ENCODE measurements at regions of chr12 and their contacts with region 1.

Region 1: DNA sequence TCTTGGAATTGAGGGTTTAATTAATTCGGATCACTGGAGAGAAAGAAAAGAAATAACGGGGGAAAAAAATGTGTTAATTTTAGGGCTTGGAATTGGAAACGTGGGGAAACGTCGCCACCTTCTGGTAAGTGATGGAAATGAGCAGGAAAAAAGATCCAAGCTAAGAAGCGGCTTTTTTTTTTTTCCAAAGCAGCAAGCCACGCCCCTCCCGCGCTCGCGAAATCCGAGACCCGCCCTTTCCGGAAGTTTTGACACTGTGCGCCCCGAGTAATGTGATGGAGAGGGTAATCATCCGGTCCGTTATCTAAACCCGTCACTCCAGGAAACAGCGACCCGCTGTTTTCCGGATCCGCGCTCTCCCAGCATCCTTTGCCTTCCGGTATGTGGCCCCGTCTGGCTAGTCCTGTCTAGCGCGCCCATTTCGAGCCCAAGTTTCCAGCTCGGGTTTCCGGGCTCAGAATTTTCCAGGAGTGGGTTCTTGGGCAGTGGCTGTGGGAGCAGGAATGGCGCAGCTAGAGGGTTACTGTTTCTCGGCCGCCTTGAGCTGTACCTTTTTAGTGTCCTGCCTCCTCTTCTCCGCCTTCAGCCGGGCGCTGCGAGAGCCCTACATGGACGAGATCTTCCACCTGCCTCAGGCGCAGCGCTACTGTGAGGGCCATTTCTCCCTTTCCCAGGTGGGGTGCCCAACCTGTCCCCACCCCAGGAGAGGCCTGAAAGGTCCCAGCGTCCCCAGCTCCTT is at the start of gene ALG10B:
- DNase-seq: peak; percentile 97
- H3K4me3 ChIP-seq: peak within 1 kb of the TSS; percentile 86
- H3K27ac ChIP-seq: peak within 1 kb of the TSS; percentile 86
- H3K4me1 ChIP-seq: no peaks in the 10 kb centered on the region
- H3K27me3 ChIP-seq: no peaks in the 10 kb centered on the region
- CTCF ChIP-seq: peak; percentile 76
- total RNA-seq, gene ALG10B: 12.1 and 13.8 TPM in 2 replicates

Region 2: GRCh38 chr12:38016606-38017005 is 300.0 kb before region 1 on chr12:
- CTCF ChIA-PET with region 1: no interaction called
- POLR2A ChIA-PET with region 1: no interaction called
- intact Hi-C with region 1: no loop called
- DNase-seq: no peak
- H3K4me3 ChIP-seq: no peak overlapping the region
- H3K27ac ChIP-seq: no peak overlapping the region
- H3K4me1 ChIP-seq: no peaks in the 10 kb centered on the region
- H3K27me3 ChIP-seq: no peaks in the 10 kb centered on the region
- CTCF ChIP-seq: no peak

Region 3: GRCh38 chr12:38138225-38139221 is 178.0 kb before region 1 on chr12:
- CTCF ChIA-PET with region 1: no interaction called
- POLR2A ChIA-PET with region 1: no interaction called
- intact Hi-C with region 1: loop called (anchors 1 kb)
- DNase-seq: peak; percentile 62
- H3K4me3 ChIP-seq: peak overlapping the region; percentile 50
- H3K27ac ChIP-seq: no peak overlapping the region
- H3K4me1 ChIP-seq: no peaks in the 10 kb centered on the region
- H3K27me3 ChIP-seq: no peaks in the 10 kb centered on the region
- CTCF ChIP-seq: peak; percentile 94

Measured in A673 (cell line).